Caco-2 (cell line): ENCODE measurements at regions of chr2 and their contacts with region 1.

Region 1: DNA sequence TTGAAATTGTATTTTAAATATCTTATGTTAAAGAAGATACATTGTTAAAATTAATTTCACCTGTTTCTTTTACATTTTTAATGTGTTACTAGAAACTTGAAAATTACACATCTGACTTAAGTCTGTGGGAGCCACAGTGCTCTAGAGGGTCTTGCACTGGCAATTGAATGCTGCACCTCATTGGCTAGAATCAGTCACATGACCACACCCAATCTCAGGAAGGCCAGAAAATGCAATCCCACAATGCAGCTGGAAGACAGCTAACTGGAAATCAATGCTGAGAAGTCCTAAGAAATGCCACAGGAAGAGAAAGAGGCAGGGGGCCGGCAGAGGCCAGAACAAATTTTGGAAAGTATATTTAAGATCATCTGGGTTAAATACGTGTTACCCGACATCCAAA is 189.2 kb upstream of the POU3F3 start:
- DNase-seq: no peak
- H3K4me3 ChIP-seq: no peak overlapping the region
- H3K4me3 Mint-ChIP-seq: no peak overlapping the region
- H3K27ac Mint-ChIP-seq: no peak overlapping the region
- H3K4me1 ChIP-seq: no peaks in the 10 kb centered on the region
- H3K4me1 Mint-ChIP-seq: no peaks in the 10 kb centered on the region
- H3K27me3 ChIP-seq: no peaks in the 10 kb centered on the region; the same call in 1 of the 2 replicates
- H3K27me3 Mint-ChIP-seq: peaks cover 6% of the 10 kb centered on the region
- CTCF ChIP-seq: no peak

Region 2: DNA sequence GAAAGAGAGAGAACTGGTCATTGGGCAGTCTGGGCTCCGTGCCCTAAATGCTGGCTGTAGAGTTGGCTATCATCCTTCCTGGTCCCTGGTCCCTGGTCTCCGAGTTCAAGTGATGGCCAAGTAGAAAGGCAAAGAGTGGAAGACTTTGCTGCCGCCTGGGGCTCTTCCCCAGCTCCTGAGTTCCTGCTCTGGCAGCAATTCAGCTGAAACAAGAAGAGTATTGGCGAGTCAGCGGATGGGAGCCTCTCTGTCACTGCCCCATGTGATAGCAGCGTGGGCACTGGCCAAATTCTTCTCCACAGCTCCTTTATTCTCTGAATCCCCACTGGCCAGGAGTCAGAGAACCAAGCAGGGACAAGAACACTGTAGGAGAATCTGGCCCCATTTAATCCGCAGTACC is 161.8 kb before region 1 on chr2:
- CTCF ChIA-PET with region 1: no interaction called
- POLR2A ChIA-PET with region 1: no interaction called
- intact Hi-C with region 1: no loop called
- DNase-seq: no peak
- H3K4me3 ChIP-seq: no peak overlapping the region
- H3K4me3 Mint-ChIP-seq: no peak overlapping the region
- H3K27ac Mint-ChIP-seq: no peak overlapping the region
- H3K4me1 ChIP-seq: no peaks in the 10 kb centered on the region
- H3K4me1 Mint-ChIP-seq: no peaks in the 10 kb centered on the region
- H3K27me3 ChIP-seq: no peaks in the 10 kb centered on the region; the same call in 1 of the 2 replicates
- H3K27me3 Mint-ChIP-seq: peaks cover 11% of the 10 kb centered on the region
- CTCF ChIP-seq: no peak

Region 3: GRCh38 chr2:104690255-104690984 is 25.7 kb after region 1 on chr2:
- CTCF ChIA-PET with region 1: no interaction called
- POLR2A ChIA-PET with region 1: no interaction called
- intact Hi-C with region 1: loop called (anchors 1 kb)
- DNase-seq: no peak
- H3K4me3 ChIP-seq: no peak overlapping the region
- H3K4me3 Mint-ChIP-seq: no peak overlapping the region
- H3K27ac Mint-ChIP-seq: no peak overlapping the region
- H3K4me1 ChIP-seq: no peaks in the 10 kb centered on the region
- H3K4me1 Mint-ChIP-seq: no peaks in the 10 kb centered on the region
- H3K27me3 ChIP-seq: no peaks in the 10 kb centered on the region
- H3K27me3 Mint-ChIP-seq: peaks cover 24% of the 10 kb centered on the region
- CTCF ChIP-seq: no peak